K562 (cell line): ENCODE measurements at regions of chr19 and their contacts with region 1.

Region 1: DNA sequence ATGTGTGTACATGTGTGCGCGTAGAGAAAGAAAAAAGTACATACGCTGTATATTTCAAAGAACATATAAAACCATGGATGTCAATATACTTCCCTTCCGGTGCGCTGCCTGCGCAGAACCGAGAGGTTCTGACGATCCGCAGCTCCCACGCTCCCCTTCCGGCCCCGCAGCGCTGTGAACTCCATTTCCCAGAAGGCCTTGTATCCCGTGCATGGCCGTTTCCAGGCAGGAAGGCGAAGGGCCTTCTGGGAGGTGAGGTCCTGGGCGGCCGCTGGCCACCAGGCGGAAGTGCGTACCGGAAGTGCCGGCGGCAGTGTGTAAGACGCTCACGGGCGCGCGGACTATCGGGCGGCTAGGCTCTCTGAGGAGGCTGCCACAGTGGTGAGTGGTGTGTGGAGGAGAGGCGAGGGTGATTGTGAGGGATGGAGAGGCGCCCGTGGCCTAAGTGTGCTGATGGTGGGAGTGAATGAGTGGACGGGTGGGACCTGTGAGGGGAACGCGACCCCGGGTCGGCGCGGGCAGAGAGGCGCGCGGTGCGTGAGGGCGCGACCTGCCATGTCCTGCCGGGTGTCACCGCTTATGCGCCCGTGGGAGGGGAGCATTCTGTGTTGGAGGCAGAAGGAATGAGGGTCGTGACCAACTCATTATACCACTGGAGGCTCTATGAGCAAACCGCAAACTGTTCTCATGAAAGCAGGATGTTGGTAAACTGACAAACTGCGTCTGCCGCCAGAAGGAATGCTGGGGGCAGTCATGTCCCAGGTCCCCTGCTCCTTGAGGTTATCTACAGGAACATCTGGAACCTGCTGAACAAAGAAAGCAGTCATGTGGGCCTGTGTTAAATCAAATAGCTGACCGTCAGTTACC is at the start of gene ERVK3-1:
- DNase-seq: peak; percentile 90 to 99 (median 92)
- ATAC-seq: peak; percentile 98
- H3K4me3 ChIP-seq: peak within 1 kb of the TSS; percentile 98
- H3K27ac ChIP-seq: peak within 1 kb of the TSS; percentile 98
- H3K4me1 ChIP-seq: peaks cover 7 to 15% of the 10 kb centered on the region in 2 experiments; a peak in 4 of 5 replicates
- H3K27me3 ChIP-seq: no peaks in the 10 kb centered on the region
- CTCF ChIP-seq: no peak
- EP300 ChIP-seq: no peak
- POLR2A ChIP-seq: peak; percentile 99
- RAD21 ChIP-seq: 0 out of 4 replicates have a peak, but pooled peaks of 1 of the 2 experiments have one; percentile 10
- polyA plus RNA-seq, gene ERVK3-1: 261 to 299 TPM

Region 2: DNA sequence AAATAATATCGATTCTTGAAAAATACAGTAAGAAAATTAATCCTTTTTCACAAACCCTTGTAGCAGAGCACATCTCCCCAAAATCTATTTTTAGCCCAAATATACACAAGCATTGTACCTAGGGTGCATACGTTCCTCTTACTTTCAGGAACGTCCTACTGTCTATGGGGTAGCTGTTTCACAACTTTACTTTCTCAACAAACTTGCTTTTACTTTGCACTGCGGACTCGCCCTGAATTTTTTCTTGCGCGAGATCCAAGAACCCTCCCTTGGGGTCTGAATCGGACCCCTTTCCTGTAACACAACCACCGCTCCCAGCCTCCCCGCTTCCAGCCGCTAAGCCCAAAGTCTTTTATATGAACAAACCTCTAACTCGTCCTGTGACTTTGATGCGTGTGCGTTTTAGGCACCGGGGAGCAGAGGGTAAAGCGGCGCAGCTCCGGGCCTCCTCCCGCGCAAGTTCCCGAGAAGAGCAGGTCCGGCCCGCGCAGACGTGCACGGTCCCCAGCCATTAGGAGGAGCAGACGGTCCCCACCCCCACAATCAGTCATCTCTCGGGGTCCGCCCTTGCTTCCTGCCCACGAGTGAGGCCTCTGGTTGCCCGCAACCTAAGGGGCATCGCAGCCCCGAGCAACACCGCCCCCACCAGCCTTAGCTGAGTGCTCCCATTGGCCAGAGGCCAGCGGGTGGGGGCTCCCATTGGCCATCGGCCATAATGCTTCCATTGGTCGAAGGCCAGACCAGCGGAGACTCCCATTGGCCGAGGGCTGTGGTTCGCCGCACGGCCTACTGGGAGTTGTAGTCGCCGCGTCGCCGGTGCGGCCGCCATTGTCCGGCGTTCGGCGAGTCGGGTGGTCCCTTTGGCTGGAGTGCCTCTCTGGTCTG is 26.9 kb before region 1 on chr19 and contains the start of gene ZNF8:
- CTCF ChIA-PET with region 1: no interaction called
- POLR2A ChIA-PET with region 1: interaction called, 4 read pairs
- in situ Hi-C with region 1: no loop called
- intact Hi-C with region 1: loop called (anchors 1 kb)
- DNase-seq: peak; percentile 99 to 100 (median 99)
- ATAC-seq: peak; percentile 98
- H3K4me3 ChIP-seq: peak within 1 kb of the TSS; percentile 64
- H3K27ac ChIP-seq: peak within 1 kb of the TSS; percentile 84
- H3K4me1 ChIP-seq: peaks cover 10 to 19% of the 10 kb centered on the region in 2 experiments; a peak in 4 of 5 replicates
- H3K27me3 ChIP-seq: no peaks in the 10 kb centered on the region
- CTCF ChIP-seq: 0 out of 6 replicates have a peak, but pooled peaks of 1 of the 3 experiments have one; percentile 13
- EP300 ChIP-seq: no peak
- POLR2A ChIP-seq: peak; percentile 91
- RAD21 ChIP-seq: no peak; a peak in 1 of 4 replicates
- polyA plus RNA-seq, gene ZNF8: 0.71 to 1.0 TPM

Region 3: DNA sequence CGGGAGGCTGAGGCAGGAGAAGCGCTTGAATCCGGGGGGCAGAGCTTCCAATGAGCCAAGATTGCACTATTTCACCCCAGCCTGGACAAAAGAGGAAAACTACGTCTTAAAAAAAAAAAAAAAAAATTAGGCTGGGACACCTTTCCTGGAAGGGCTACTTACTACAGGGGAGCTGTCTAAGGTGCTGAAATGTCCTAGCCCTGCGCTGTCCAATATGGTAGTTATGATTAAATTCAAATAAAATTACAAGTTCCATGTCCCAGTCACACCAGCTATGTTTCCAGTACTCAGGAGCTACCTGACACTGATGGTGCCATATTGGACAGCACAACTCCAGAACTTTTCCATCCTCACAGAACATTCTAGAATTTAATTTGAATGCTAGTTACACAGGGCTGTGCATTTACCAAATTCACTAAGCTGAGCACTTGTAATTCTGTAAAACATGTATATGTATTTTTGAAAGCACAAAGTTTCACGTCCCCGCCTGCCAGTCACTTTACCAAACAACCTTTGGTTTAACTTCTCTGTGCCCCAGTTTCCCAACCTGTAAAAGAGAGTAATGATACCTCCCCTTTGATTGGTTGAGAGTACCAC is 12.3 kb after region 1 on chr19:
- CTCF ChIA-PET with region 1: no interaction called
- POLR2A ChIA-PET with region 1: interaction called, 27 read pairs
- in situ Hi-C with region 1: no loop called
- intact Hi-C with region 1: no loop called
- DNase-seq: peak; percentile 36 to 61 (median 52)
- ATAC-seq: peak; percentile 72
- H3K4me3 ChIP-seq: no peak overlapping the region
- H3K27ac ChIP-seq: no peak overlapping the region
- H3K4me1 ChIP-seq: no peaks in the 10 kb centered on the region; a peak in 1 of 5 replicates
- H3K27me3 ChIP-seq: no peaks in the 10 kb centered on the region
- CTCF ChIP-seq: no peak
- EP300 ChIP-seq: no peak
- POLR2A ChIP-seq: no peak
- RAD21 ChIP-seq: no peak

Region 4: DNA sequence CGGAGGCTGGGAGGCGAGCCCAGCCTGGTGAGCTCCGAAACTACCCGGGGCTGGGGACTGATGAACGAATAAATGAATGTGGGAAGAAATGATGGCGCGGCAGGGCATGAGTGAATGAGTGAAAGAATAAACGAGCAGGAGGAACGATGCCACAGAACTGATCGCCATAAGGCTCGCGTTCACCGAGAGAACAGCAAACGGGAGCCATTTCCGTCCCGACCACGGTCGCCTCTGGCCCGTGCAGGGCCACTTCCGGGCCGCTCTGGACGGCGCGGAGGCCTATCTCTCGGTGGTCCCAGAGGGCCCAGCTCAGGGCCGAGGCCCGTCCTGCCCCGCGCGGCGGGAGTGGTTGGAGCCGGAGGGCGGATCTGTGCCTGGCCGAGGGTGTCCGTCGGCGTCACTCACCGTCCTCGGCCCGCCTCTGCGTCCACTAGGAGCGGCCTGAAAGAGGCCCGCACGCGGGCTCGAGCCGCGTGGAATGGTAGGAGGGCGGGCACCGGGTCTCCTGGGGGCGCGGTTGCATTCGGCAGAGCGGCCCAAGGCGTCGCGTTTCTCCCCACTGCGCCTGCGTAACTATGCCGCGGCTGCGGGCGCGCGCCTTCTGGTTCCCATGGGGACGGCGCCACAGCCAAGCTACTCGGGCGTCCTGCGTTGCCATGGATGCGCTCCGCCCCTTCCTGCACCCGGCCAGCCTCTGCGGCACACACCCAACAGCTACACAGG is 57.1 kb after region 1 on chr19 and contains the start of gene ZNF497:
- CTCF ChIA-PET with region 1: no interaction called
- POLR2A ChIA-PET with region 1: no interaction called
- in situ Hi-C with region 1: no loop called
- intact Hi-C with region 1: loop called (anchors 2 kb)
- DNase-seq: peak; percentile 98
- ATAC-seq: peak; percentile 98
- H3K4me3 ChIP-seq: peak within 1 kb of the TSS; percentile 65
- H3K27ac ChIP-seq: peak within 1 kb of the TSS; percentile 97
- H3K4me1 ChIP-seq: peaks cover 7 to 38% of the 10 kb centered on the region in 2 experiments; a peak in 3 of 5 replicates
- H3K27me3 ChIP-seq: no peaks in the 10 kb centered on the region
- CTCF ChIP-seq: no peak
- EP300 ChIP-seq: no peak
- POLR2A ChIP-seq: peak; percentile 95
- RAD21 ChIP-seq: no peak; a peak in 1 of 4 replicates
- polyA plus RNA-seq, gene ZNF497: 0.06 TPM in 1 of 2 experiments, not detected in the other